Calu3 (cell line): ENCODE measurements at regions of chr5 and their contacts with region 1.

Region 1: GRCh38 chr5:180328296-180329137 is 24.6 kb downstream of the GFPT2 start:
- DNase-seq: peak; percentile 90
- H3K4me3 Mint-ChIP-seq: no peak overlapping the region
- H3K27ac Mint-ChIP-seq: no peak overlapping the region
- H3K4me1 Mint-ChIP-seq: peaks cover 24% of the 10 kb centered on the region
- H3K27me3 Mint-ChIP-seq: peaks cover 24% of the 10 kb centered on the region
- CTCF ChIP-seq: peak; percentile 92

Region 2: GRCh38 chr5:179806250-179807222 is 522.0 kb before region 1 on chr5 and contains the start of gene MGAT4B:
- CTCF ChIA-PET with region 1: no interaction called
- intact Hi-C with region 1: no loop called
- DNase-seq: peak; percentile 87
- H3K4me3 Mint-ChIP-seq: peak within 1 kb of the TSS; percentile 95
- H3K27ac Mint-ChIP-seq: peak within 1 kb of the TSS; percentile 93
- H3K4me1 Mint-ChIP-seq: peaks cover 26% of the 10 kb centered on the region
- H3K27me3 Mint-ChIP-seq: no peaks in the 10 kb centered on the region
- CTCF ChIP-seq: no peak
- total RNA-seq, gene MGAT4B: 610 and 613 TPM in 2 replicates

Region 3: GRCh38 chr5:180117000-180117725 is 211.4 kb before region 1 on chr5:
- CTCF ChIA-PET with region 1: interaction called, 11 read pairs
- intact Hi-C with region 1: no loop called
- DNase-seq: peak; percentile 81
- H3K4me3 Mint-ChIP-seq: no peak overlapping the region
- H3K27ac Mint-ChIP-seq: no peak overlapping the region
- H3K4me1 Mint-ChIP-seq: no peaks in the 10 kb centered on the region
- H3K27me3 Mint-ChIP-seq: peaks cover 19% of the 10 kb centered on the region
- CTCF ChIP-seq: peak; percentile 88

Region 4: GRCh38 chr5:180126726-180127681 is 201.5 kb before region 1 on chr5:
- CTCF ChIA-PET with region 1: interaction called, 3 read pairs
- intact Hi-C with region 1: loop called (anchors 5 kb)
- DNase-seq: peak; percentile 79
- H3K4me3 Mint-ChIP-seq: no peak overlapping the region
- H3K27ac Mint-ChIP-seq: no peak overlapping the region
- H3K4me1 Mint-ChIP-seq: peaks cover 23% of the 10 kb centered on the region
- H3K27me3 Mint-ChIP-seq: peaks cover 81% of the 10 kb centered on the region
- CTCF ChIP-seq: peak; percentile 93

Region 5: DNA sequence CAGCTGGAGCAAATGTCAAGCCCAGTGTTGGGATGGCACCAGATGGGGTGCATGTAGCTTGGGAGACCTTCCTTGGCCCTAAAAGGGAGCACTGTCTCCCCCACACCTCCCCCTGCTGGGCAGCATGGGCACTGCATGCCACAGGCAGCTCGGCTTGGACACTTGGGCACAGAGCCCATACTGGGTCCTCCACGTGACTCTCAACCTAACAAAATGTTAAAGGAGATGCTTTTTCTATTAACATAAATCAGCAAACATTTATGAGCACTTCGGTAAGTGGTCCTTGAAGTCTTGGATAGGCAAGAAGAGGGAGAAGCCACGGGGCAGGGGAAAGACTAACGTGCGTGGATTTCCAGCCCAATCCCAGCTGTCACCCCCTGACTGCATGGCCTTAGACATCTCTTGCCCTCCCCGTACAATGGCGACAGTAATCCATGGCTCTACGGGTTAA is 12.7 kb before region 1 on chr5:
- CTCF ChIA-PET with region 1: interaction called, 13 read pairs
- intact Hi-C with region 1: no loop called
- DNase-seq: peak; percentile 83
- H3K4me3 Mint-ChIP-seq: no peak overlapping the region
- H3K27ac Mint-ChIP-seq: no peak overlapping the region
- H3K4me1 Mint-ChIP-seq: no peaks in the 10 kb centered on the region
- H3K27me3 Mint-ChIP-seq: peaks cover 36% of the 10 kb centered on the region
- CTCF ChIP-seq: peak; percentile 95

Region 6: DNA sequence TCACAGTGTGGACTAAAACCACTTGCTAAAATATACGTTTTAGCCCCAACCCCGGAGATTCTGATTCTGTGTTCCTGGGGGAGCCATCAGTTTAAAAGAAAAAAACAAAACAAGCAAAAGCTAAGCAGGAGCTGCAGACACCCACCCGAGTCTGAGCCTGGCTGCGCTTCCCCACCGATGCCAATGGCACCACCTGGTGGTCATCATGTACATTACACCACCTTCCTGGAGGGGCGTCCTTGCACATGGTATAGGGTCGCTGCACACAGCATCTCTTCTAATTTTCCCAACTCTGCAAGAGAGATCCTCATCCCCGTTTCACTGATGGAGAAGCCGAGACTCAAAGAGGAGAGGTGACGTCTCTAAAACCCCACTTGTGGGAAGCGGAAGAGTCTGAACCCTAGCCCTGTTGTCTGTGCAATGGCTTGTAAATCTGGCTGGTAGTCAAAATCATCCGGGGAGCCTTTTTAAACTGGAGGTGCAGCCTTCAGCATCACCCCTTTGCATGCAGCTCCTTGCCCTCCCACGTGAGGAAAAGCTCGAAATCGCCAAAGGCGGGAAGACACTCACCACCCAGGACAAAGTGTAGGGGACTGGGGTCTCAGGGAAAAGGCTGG is 142.6 kb after region 1 on chr5:
- CTCF ChIA-PET with region 1: interaction called, 5 read pairs
- intact Hi-C with region 1: loop called (anchors 5 kb)
- DNase-seq: peak; percentile 76
- H3K4me3 Mint-ChIP-seq: no peak overlapping the region
- H3K27ac Mint-ChIP-seq: no peak overlapping the region
- H3K4me1 Mint-ChIP-seq: peaks cover 41% of the 10 kb centered on the region
- H3K27me3 Mint-ChIP-seq: no peaks in the 10 kb centered on the region
- CTCF ChIP-seq: peak; percentile 97